Activated CD8-positive, alpha-beta memory T cell treated with anti-CD3 and anti-CD28 coated beads, Interleukin-2, amount 10 ng/mL, durations not matched to agents 7 days and 5 days (primary cell): ENCODE measurements at regions of chr17 and their contacts with region 1.

Region 1: GRCh38 chr17:45021607-45022287 is 29.7 kb downstream of the DCAKD start:
- DNase-seq: peak; percentile 64
- ATAC-seq: peak; percentile 81
- H3K4me3 Mint-ChIP-seq: no peak overlapping the region
- H3K27ac Mint-ChIP-seq: no peak overlapping the region
- H3K4me1 Mint-ChIP-seq: peaks cover 15% of the 10 kb centered on the region
- H3K27me3 Mint-ChIP-seq: peaks cover 34% of the 10 kb centered on the region

Region 2: DNA sequence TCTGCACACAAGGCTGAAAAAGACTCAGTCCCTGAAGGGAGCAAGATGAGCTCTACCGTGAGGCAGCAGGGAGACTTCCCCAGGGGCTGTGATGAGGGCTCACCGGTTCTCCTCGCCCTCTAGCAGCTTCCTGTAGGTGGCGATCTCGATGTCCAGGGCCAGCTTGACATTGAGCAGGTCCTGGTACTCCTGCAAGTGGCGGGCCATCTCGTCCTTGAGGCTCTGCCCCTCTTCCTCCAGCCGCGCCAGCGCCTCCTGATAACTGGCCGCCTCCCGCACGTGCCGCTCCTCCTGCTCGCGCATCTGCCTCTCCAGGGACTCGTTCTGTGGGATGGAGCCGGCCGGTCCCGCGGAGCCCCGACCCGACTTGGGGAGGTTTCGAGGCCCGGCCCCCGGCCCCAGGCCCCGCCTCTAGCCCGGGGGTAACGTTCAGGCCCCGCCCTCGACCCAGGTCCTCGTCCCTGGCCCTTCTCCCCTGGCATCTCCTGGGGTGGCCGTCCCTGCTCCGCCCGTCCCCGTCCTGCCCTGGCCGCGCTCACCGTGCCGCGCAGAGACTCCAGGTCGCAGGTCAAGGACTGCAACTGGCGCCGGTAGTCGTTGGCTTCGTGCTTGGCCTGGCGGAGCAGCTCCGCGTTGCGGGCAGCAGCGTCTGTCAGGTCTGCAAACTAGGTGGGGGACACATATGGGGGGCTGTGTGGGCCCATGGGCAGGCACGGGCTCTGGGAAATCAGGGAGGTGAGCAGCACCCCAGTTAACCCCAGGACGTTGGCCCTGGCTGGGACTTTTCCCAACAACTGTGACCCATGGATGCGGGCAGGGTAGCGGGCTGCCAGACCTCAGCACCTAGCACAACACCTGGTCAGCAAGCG is 110.4 kb before region 1 on chr17:
- CTCF ChIA-PET with region 1: interaction called, 38 read pairs
- DNase-seq: peak; percentile 71
- ATAC-seq: peak; percentile 76
- H3K4me3 Mint-ChIP-seq: no peak overlapping the region
- H3K27ac Mint-ChIP-seq: no peak overlapping the region
- H3K4me1 Mint-ChIP-seq: peaks cover 16% of the 10 kb centered on the region
- H3K27me3 Mint-ChIP-seq: peaks cover 29% of the 10 kb centered on the region

Region 3: DNA sequence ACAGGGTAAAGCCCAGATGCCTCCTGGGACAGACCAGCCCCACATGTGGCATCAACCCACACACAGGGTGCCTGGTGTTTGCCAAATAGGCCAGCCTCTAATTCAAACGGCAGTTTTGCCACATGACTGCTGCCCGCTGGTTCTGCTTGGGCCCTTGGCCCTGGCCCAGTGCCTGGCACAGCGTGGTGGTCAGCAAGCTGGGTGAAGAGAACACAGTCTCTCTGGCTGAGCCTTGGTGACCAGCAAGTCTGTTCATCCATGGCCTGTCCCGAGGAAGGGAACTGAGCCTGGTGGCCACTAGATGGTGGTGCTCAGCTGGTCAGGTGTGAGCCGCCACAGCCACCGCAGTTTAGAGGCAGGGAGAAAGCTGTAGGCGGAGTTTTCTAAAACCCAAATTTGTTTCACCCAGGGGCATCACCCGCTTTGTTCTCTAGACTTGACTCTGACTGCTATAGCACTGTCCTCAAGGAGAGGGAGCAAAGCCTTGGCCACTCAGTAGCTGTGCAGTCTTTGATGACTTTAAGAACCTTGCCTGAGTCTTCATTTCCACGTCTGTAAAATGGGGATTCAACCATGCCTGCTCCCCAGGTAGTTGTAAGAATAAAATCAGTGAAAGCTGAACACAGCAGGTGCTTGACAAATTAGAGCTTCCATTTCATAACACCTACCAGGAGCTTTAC is 101.7 kb before region 1 on chr17:
- CTCF ChIA-PET with region 1: interaction called, 73 read pairs
- DNase-seq: peak; percentile 80
- ATAC-seq: peak; percentile 85
- H3K4me3 Mint-ChIP-seq: no peak overlapping the region
- H3K27ac Mint-ChIP-seq: no peak overlapping the region
- H3K4me1 Mint-ChIP-seq: peaks cover 4% of the 10 kb centered on the region
- H3K27me3 Mint-ChIP-seq: peaks cover 26% of the 10 kb centered on the region

Region 4: DNA sequence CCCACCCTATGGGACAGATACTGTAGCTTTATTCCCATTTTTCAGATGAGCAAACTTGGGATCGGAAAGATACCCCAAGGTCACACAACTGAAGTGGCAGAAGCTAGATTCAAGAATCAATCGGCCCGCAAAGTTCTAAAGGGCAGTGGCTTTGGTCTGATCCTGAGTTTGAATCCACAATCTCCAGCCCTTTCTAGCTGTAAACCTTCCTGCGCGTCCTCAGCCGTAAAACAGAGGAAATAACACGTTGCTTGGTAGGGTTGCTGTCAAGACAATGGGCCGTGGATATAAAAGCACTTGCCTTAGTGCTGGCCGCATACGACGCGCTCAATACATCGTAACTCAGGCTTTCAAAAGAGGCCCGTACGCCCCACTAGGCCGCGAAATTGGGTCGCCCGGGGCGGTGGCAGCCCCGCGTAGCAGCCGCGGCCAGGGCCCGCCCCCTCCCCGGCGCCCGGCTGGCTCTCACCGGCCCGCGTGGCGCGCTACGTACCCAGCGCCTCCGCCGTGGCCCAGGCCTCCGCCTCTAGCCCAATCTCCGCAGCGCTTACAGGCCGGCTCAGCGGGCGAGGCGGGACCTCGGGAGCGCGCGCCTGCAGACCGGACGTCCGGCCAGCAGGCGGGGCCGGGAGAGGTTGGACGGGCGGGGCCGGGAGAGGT is 29.4 kb after region 1 on chr17 and contains the start of gene DCAKD:
- CTCF ChIA-PET with region 1: interaction called, 25 read pairs
- DNase-seq: peak; percentile 96
- ATAC-seq: peak; percentile 98
- H3K4me3 Mint-ChIP-seq: peak within 1 kb of the TSS; percentile 91
- H3K27ac Mint-ChIP-seq: peak within 1 kb of the TSS; percentile 91
- H3K4me1 Mint-ChIP-seq: peaks cover 45% of the 10 kb centered on the region
- H3K27me3 Mint-ChIP-seq: no peaks in the 10 kb centered on the region
- total RNA-seq, gene DCAKD: 29.4 to 34.3 TPM